Calu3 (cell line): ENCODE measurements at regions of chr5 and their contacts with region 1.

Region 1: DNA sequence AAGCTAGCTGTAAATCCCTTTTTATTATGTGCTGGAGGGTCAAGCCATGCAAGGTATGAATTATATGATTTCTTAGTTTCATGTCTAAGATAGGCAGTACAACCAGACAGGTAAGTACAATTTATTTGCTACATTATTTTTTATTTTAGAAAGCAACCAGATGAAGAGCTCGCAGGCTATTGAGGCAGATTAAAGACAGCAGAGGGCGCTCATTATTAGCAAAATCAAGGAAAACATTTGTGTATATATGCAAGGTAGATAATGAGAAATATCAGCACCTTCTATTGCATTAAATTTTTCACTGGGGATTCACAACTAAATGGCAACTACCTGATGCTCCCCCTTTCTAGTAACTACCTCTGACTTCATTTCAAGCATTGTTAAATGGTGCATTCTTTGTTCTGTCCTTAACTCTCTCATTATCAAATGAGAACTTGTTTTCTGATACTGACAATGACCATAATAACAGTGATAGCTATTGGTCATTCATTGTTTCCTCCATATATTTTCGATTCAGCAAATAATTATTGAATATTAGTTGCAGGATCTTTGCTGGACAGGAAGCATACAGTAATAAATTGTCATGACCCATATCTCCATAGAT is 8.6 kb downstream of the SCGB3A2 start:
- DNase-seq: peak; percentile 56
- H3K4me3 Mint-ChIP-seq: no peak overlapping the region
- H3K27ac Mint-ChIP-seq: no peak overlapping the region
- H3K4me1 Mint-ChIP-seq: peaks cover 22% of the 10 kb centered on the region
- H3K27me3 Mint-ChIP-seq: no peaks in the 10 kb centered on the region
- CTCF ChIP-seq: peak; percentile 63

Region 2: DNA sequence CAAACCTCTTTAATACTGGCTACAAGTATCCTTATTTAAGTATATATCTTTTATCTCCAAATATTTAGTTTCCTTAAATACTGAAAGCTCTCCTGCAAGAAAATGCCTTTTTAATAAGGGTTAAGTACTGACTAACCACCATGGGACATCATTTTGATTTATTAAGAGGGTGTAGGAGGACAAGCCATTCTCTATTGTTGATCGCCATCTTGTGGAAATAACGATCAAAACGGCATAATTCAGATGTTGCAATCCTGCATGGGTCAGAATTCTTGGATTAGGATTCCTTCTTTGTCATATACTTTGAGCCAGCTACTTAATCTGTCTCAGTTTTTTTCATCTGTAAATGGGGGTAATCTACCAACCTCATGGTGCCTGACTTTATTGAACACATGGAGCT is 47.9 kb after region 1 on chr5:
- CTCF ChIA-PET with region 1: interaction called, 20 read pairs
- intact Hi-C with region 1: loop called (anchors 1 kb)
- DNase-seq: peak; percentile 58
- H3K4me3 Mint-ChIP-seq: no peak overlapping the region
- H3K27ac Mint-ChIP-seq: no peak overlapping the region
- H3K4me1 Mint-ChIP-seq: no peaks in the 10 kb centered on the region
- H3K27me3 Mint-ChIP-seq: no peaks in the 10 kb centered on the region
- CTCF ChIP-seq: peak; percentile 66

Region 3: DNA sequence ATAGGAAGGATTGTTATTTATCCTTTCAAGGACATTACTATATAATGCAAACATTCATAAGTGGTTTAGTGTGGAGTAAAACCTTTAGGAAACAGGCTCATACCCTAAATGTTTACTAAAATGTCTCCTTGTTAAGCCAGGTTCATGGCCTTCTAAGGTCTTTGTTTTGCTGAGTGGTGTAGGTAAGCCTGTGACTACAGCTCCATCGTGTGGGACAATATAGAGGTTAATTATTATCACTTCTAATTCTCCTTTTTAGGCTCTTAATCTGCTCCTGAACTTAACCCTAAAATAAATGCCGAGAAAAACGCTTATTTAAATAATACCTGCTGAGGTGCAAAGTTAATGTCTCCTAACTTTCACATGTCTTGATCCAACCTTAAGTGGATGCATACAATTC is 220.5 kb after region 1 on chr5:
- CTCF ChIA-PET with region 1: no interaction called
- intact Hi-C with region 1: loop called (anchors 2 kb)
- DNase-seq: peak; percentile 20
- H3K4me3 Mint-ChIP-seq: no peak overlapping the region
- H3K27ac Mint-ChIP-seq: no peak overlapping the region
- H3K4me1 Mint-ChIP-seq: no peaks in the 10 kb centered on the region
- H3K27me3 Mint-ChIP-seq: no peaks in the 10 kb centered on the region
- CTCF ChIP-seq: no peak